ENCODE measurements at regions of chr11 and their contacts with region 1.

Region 1: DNA sequence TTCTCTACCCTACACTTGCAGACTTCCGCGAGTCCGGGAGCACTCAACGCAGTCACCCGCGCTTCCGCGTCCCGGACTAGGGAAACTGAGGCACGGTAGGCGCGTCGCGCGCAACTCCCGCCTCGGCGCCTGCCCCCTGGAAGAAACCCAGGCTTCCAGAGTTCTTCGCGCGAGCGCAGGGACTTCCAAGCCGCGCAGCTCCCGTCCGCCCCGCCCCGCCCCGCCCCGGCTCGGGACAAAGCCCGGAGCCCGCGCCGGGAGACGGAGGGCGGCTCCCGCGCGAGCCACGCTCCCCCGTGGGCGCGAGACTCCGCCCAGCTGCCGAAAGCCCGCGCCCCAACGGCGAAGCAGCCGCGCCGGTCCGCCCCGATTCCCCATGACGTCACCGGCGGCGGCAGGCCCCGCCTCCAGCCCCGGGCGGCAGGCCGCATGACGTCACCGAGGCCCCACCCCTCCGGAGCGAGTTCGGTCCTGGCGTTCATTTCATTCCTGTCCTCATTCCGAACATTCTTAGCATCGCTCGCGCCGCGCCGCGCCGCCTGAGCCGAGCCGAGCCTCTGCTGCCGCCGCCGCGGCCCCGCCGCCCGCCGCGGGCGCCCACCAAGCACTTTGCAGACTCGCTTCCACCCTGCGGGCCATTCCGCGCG is at the start of gene TEAD1:
- DNase-seq: peak; percentile 92 to 94
- ATAC-seq: peak; percentile 81 to 82
- H3K4me3 ChIP-seq: peak within 1 kb of the TSS; percentile 68 to 85 (median 72)
- H3K27ac ChIP-seq: peak within 1 kb of the TSS; percentile 88 to 96 (median 93)
- H3K4me1 ChIP-seq: peaks cover 31% of the 10 kb centered on the region in 2 donors
- H3K27me3 ChIP-seq: no peaks in the 10 kb centered on the region
- CTCF ChIP-seq: peak in 4 of 5 experiments; percentile 6 to 16 (median 14)
- POLR2A ChIP-seq: peak; percentile 73 to 88
- total RNA-seq, gene TEAD1: 46.1 to 175 (median 126) TPM

Region 2: DNA sequence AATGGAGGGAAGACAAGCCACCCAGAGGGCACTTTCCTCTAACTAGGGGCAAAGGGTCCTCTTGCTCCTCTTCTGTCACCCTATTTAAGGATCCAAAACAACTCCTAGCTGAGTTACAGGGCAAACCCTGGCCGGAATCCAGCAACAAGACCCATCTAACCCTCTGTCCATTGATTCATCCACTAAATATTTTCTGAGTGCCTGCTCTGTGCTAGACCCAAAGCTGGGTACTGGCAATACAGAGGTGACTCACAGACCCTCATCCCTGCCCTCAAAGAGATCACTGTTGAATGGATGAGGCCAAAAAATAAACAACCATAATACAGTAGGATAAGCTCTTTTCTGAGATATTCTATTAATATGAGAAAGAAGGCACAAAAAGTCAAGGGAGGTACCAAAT is 1047.9 kb before region 1 on chr11:
- in situ Hi-C with region 1: no loop called
- intact Hi-C with region 1: no loop called
- DNase-seq: no peak
- ATAC-seq: no peak
- H3K4me3 ChIP-seq: no peak overlapping the region
- H3K27ac ChIP-seq: no peak overlapping the region
- H3K4me1 ChIP-seq: peaks cover 8 to 13% of the 10 kb centered on the region in 2 donors
- H3K27me3 ChIP-seq: no peaks in the 10 kb centered on the region
- CTCF ChIP-seq: no peak
- POLR2A ChIP-seq: no peak

Region 3: DNA sequence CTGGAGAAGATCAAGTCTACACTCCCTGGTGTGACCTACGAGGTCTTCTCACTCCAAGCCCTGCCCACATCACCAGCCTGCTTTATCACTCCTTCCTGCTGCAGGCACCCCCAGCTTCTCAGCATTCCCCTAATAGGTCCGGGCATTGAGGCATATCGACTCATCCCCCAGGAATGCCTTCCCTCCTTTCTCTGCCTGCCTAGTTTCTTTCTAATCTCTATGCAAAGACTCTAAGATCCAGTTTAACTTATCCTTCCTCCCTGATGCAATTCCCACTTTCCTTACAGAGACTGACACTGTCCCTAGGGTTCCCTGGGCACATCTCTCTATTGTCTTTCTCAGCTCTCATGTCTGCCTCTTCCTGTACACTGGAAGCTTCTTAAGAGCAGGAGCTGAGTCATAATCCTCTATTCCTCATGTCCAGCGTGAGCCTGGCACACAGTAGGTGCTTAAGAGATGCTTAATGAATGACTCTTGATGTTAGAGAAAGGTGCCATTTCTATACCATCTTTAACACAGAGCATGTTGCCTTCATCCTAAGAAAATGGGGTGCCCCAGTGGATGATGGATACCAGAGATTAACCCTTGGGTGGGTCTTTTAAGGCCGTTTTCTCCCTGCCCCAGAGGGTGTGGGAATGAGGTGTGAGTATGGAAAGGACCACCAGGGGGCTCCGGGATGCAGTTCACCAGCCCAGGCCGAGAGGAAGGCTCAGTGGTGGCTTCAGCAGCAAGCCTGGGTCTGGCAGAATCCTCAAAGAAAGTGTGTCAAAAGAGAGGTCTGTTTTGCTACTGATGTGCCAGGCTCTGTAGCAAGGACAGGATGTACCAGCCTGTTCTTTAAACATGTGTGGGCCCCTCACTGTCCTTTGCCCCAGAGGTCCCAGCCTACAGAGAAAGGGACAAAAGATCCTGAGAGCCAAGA is 262.0 kb before region 1 on chr11:
- in situ Hi-C with region 1: no loop called
- intact Hi-C with region 1: loop called (anchors 2 kb)
- DNase-seq: peak; percentile 34 to 66
- ATAC-seq: peak; percentile 76 to 82
- H3K4me3 ChIP-seq: no peak overlapping the region
- H3K27ac ChIP-seq: peak overlapping the region; percentile 38 to 65 (median 56)
- H3K4me1 ChIP-seq: peaks cover 34 to 35% of the 10 kb centered on the region in 2 donors
- H3K27me3 ChIP-seq: no peaks in the 10 kb centered on the region
- CTCF ChIP-seq: peak; percentile 65 to 80 (median 77)
- POLR2A ChIP-seq: no peak

Region 4: GRCh38 chr11:12744826-12745502 is 70.9 kb after region 1 on chr11:
- in situ Hi-C with region 1: no loop called
- intact Hi-C with region 1: loop called (anchors 1 kb)
- DNase-seq: peak; percentile 71 to 87
- ATAC-seq: peak; percentile 89 to 92
- H3K4me3 ChIP-seq: peak overlapping the region in 3 of 4 donors; percentile 4 to 20 (median 18)
- H3K27ac ChIP-seq: peak overlapping the region; percentile 81 to 90 (median 83)
- H3K4me1 ChIP-seq: peaks cover 74 to 85% of the 10 kb centered on the region in 2 donors
- H3K27me3 ChIP-seq: no peaks in the 10 kb centered on the region
- CTCF ChIP-seq: no peak
- POLR2A ChIP-seq: peak in 1 of 2 donors; percentile 69

Region 5: GRCh38 chr11:12893787-12894672 is 220.0 kb after region 1 on chr11:
- in situ Hi-C with region 1: loop called (anchors 5 to 25 kb)
- intact Hi-C with region 1: loop called (anchors 2 kb)
- DNase-seq: peak in 1 of 2 donors; percentile 46
- ATAC-seq: no peak
- H3K4me3 ChIP-seq: no peak overlapping the region
- H3K27ac ChIP-seq: peak overlapping the region; percentile 68 to 82 (median 70)
- H3K4me1 ChIP-seq: peaks cover 48 to 50% of the 10 kb centered on the region in 2 donors
- H3K27me3 ChIP-seq: no peaks in the 10 kb centered on the region
- CTCF ChIP-seq: peak; percentile 87 to 93 (median 89)
- POLR2A ChIP-seq: no peak

Region 6: GRCh38 chr11:13276832-13277767 is 603.1 kb after region 1 on chr11:
- in situ Hi-C with region 1: no loop called
- intact Hi-C with region 1: loop called (anchors 5 kb)
- DNase-seq: peak; percentile 99
- ATAC-seq: peak; percentile 80 to 82
- H3K4me3 ChIP-seq: peak overlapping the region; percentile 84 to 97 (median 94)
- H3K27ac ChIP-seq: peak overlapping the region; percentile 86 to 98 (median 96)
- H3K4me1 ChIP-seq: peaks cover 26 to 39% of the 10 kb centered on the region in 2 donors
- H3K27me3 ChIP-seq: no peaks in the 10 kb centered on the region
- CTCF ChIP-seq: peak in 1 of 5 experiments; percentile 37
- POLR2A ChIP-seq: peak; percentile 62 to 92

Measured in gastrocnemius medialis (tissue), 4 donors.